ENCODE measurements at regions of chr7 and their contacts with region 1.

Region 1: DNA sequence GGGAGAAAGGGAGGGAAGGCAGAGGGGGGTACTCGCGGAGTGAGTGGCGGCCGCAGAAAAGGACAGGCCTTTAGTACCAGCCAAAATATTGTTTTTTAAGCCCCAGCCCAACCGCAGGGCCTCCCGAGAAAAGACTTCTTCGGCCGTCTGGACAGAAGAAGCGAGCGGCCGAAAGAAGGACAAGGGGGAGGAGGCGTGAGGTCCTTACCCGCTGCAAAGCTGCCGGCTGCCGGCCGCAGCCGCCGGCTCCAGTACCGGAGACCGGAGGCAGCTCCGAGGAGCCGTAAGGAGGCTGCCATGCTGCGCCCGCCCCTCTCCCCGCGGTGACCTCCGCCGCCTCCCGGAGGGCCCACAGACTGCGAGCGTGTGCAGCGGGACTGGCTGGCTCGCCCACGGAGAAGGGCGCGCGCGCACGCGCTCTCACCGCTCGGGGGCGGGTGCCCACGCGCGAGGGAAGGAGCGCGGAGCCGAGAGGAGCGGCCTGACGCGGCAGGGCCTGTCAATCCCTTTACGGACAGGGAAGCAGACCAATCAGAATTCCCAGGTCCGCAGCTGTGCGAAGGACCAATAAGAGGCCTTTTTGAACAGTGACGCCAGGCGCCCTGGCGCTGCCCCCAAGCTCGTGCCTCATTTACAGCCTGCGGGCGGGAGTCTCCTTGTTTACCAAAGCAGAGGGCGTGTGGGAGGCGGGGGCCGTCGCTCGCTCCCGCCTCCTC is at the start of gene HIBADH:
- DNase-seq: peak; percentile 96
- H3K4me3 Mint-ChIP-seq: peak within 1 kb of the TSS; percentile 76
- H3K27ac Mint-ChIP-seq: peak within 1 kb of the TSS; percentile 73
- H3K4me1 Mint-ChIP-seq: peaks cover 22% of the 10 kb centered on the region
- H3K27me3 Mint-ChIP-seq: peaks cover 3% of the 10 kb centered on the region
- total RNA-seq, gene HIBADH: 13.1 to 13.3 TPM

Region 2: GRCh38 chr7:27641581-27642230 is 20.9 kb before region 1 on chr7:
- CTCF ChIA-PET with region 1: interaction called, 3 read pairs
- POLR2A ChIA-PET with region 1: interaction called, 11 read pairs
- DNase-seq: no peak
- H3K4me3 Mint-ChIP-seq: no peak overlapping the region
- H3K27ac Mint-ChIP-seq: no peak overlapping the region
- H3K4me1 Mint-ChIP-seq: peaks cover 19% of the 10 kb centered on the region
- H3K27me3 Mint-ChIP-seq: no peaks in the 10 kb centered on the region

Region 3: DNA sequence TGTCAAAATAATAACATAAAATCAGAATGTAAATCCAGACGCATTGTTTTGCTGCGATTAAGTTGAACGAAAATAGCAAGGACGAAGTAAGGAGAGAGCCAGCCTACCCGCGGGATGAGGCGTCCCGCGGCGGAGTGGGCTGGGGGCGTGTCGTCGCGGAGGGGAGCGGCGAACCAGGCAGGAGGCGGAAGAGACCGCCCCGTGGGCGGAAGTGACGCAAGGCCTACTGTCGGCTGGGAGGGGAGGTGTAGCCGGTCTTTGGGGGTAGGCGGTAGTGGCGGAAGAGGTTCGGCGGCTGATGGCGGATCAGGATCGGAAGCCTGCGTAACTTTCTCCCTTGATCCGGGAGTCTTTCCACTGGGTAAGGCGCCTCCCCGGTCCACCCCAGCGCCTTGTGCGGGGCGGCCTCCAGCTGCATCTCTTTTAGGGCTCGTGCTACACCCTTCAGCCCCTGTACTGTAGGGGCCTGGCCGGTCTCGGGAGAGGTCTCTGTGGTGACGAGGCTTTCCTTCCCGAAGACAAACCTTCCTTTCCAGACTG is 77.3 kb after region 1 on chr7 and contains the start of gene TAX1BP1:
- CTCF ChIA-PET with region 1: interaction called, 5 read pairs
- POLR2A ChIA-PET with region 1: interaction called, 54 read pairs
- DNase-seq: peak; percentile 94
- H3K4me3 Mint-ChIP-seq: peak within 1 kb of the TSS; percentile 97
- H3K27ac Mint-ChIP-seq: peak within 1 kb of the TSS; percentile 99
- H3K4me1 Mint-ChIP-seq: peaks cover 39% of the 10 kb centered on the region
- H3K27me3 Mint-ChIP-seq: no peaks in the 10 kb centered on the region
- total RNA-seq, gene TAX1BP1: 76.5 to 80.0 TPM